ENCODE measurements at regions of chr7 and their contacts with region 1.

Region 1: DNA sequence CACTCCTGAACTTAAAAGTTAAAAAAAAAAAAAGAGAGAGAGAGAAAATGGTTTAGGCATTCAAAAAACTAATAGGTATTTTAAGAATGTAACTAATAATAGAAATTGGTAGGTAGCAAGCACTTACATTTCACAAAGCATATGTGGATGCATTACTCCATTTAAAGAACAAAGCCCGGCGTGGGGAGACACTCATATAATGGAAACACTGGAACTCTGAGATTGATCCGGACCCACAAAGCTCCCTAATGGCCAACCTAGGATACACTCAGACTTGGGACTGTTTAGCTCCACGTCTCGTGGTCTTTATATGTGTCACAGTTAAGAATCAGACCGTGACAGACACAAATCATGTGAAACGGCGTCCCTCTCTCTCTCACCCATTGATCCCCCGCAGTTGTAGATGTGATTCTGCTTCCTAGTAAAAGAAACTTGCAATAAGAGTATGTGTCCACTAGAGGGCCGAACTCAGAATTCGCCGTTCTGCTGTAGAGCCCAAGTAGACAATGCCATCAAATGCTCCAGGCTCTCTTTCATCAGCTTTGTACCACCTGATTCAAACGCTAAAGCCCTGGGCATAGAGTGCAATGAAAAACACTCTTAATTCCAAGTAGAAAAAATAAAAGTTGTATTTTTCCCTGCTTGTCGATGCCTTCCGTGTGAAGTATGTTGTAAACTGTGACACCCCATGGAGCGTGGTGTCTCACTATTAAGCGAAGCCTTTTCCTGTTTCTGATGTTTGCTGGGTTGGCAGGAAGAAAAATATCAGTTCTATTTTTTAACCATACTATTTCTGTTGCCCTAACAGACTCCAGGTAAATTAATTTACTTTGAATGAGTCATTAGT is 429.0 kb upstream of the MTPN start:
- DNase-seq: no peak
- ATAC-seq: no peak
- H3K4me3 Mint-ChIP-seq: no peak overlapping the region
- H3K27ac Mint-ChIP-seq: no peak overlapping the region
- H3K4me1 Mint-ChIP-seq: peaks cover 7% of the 10 kb centered on the region
- H3K27me3 Mint-ChIP-seq: no peaks in the 10 kb centered on the region
- CTCF ChIP-seq: no peak

Region 2: GRCh38 chr7:135801045-135801693 is 605.0 kb before region 1 on chr7:
- CTCF ChIA-PET with region 1: no interaction called
- POLR2A ChIA-PET with region 1: no interaction called
- intact Hi-C with region 1: loop called (anchors 5 kb)
- DNase-seq: no peak
- ATAC-seq: peak; percentile 49
- H3K4me3 Mint-ChIP-seq: no peak overlapping the region
- H3K27ac Mint-ChIP-seq: no peak overlapping the region
- H3K4me1 Mint-ChIP-seq: peaks cover 7% of the 10 kb centered on the region
- H3K27me3 Mint-ChIP-seq: peaks cover 17% of the 10 kb centered on the region
- CTCF ChIP-seq: peak; percentile 28

Region 3: GRCh38 chr7:136618818-136619217 is 212.7 kb after region 1 on chr7:
- CTCF ChIA-PET with region 1: no interaction called
- POLR2A ChIA-PET with region 1: no interaction called
- intact Hi-C with region 1: no loop called
- DNase-seq: no peak
- ATAC-seq: no peak
- H3K4me3 Mint-ChIP-seq: no peak overlapping the region
- H3K27ac Mint-ChIP-seq: no peak overlapping the region
- H3K4me1 Mint-ChIP-seq: no peaks in the 10 kb centered on the region
- H3K27me3 Mint-ChIP-seq: no peaks in the 10 kb centered on the region
- CTCF ChIP-seq: no peak

Region 4: GRCh38 chr7:136717910-136718557 is 311.9 kb after region 1 on chr7:
- CTCF ChIA-PET with region 1: no interaction called
- POLR2A ChIA-PET with region 1: no interaction called
- intact Hi-C with region 1: no loop called
- DNase-seq: no peak
- ATAC-seq: no peak
- H3K4me3 Mint-ChIP-seq: no peak overlapping the region
- H3K27ac Mint-ChIP-seq: no peak overlapping the region
- H3K4me1 Mint-ChIP-seq: no peaks in the 10 kb centered on the region
- H3K27me3 Mint-ChIP-seq: no peaks in the 10 kb centered on the region
- CTCF ChIP-seq: no peak

Region 5: DNA sequence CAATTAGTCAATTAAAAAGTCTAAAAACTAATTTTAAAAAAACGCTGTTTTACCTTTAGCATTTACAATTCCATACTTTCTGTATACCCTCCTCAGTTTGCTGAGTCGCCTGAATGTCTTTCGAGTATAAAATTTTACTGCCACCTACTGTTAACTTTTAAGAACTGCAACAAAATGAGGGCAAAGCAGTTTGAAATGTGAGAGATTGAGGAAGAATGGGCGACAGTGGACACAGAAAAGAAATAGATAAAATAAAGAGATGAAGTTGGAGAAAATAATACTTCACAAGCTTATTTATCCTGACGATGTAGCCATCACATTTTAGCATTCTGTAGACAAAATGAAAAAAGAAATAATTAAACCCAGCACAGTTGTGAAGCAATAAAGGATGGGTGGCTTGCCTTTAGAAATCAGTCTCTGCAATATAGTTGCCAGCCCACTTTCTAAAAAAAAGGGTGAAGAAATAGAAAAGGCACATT is 1048.1 kb after region 1 on chr7:
- CTCF ChIA-PET with region 1: no interaction called
- POLR2A ChIA-PET with region 1: no interaction called
- intact Hi-C with region 1: loop called (anchors 10 kb)
- DNase-seq: no peak
- ATAC-seq: no peak
- H3K4me3 Mint-ChIP-seq: no peak overlapping the region
- H3K27ac Mint-ChIP-seq: no peak overlapping the region
- H3K4me1 Mint-ChIP-seq: no peaks in the 10 kb centered on the region
- H3K27me3 Mint-ChIP-seq: no peaks in the 10 kb centered on the region
- CTCF ChIP-seq: no peak

Measured in activated B cell treated with CpG ODN at 0.5 μM for 24 hours (primary cell).